Heart left ventricle (tissue), 16 donors: ENCODE measurements at regions of chr14 and their contacts with region 1.

Region 1: DNA sequence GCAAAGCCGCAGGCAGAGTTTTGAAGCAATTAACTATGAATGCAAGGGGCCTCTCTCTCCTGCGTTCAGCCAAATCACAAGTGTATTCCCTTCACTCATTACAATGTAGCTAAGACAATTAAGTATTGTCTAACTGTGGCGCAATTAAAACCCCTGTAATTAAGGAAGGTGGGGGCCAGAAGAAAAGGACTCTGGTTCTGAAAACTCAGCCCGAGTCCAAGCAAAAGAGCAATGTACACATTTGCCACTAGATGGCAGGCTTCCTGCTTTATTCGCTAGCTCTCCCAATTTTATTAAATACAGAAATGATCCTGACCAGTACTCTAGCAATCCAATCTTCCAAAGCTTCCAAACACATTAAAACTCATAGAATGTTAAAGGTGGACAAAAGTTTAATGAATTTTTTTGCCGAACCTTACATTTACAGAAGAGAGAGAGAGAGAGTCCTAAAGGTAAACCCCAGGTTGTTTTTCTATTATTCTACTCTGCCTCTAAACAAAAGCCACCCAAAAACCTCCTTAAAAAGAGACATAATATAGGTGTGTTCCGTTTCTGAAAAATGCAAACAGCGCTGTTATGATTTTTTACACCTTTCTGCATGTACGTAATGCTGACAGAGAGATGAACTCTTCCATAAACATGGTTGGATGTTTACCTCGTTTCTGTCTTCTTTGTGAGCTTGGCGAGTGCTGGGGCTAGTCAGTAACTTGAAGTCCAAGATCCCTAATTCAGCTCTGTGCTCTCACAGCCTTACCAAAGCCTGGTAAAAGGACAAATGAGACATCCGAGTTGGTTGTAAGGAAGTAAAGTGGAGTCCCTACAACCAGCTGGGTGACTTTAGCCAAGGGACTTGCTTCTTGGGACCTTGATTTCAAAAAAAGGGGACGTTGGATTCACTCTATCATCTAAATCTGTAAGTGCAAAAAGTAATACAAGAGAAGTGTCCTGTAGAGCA is 50.9 kb upstream of the VASH1 start:
- DNase-seq: peak in 1 of 5 donors; percentile 35
- ATAC-seq: peak in 3 of 4 donors; percentile 35 to 72 (median 66)
- H3K4me3 ChIP-seq: no peak overlapping the region
- H3K27ac ChIP-seq: peak overlapping the region in 1 of 12 donors; percentile 30
- H3K4me1 ChIP-seq: peaks cover 0 to 18% (median 10%) of the 10 kb centered on the region in 12 donors
- H3K27me3 ChIP-seq: no peaks in the 10 kb centered on the region
- CTCF ChIP-seq: peak; percentile 71 to 86 (median 76)
- POLR2A ChIP-seq: no peak

Region 2: GRCh38 chr14:76761136-76761959 is 51.0 kb after region 1 on chr14 and contains the start of gene VASH1:
- intact Hi-C with region 1: loop called in 9 of 10 experiments (anchors 1 to 5 kb)
- DNase-seq: peak; percentile 74 to 91 (median 85)
- ATAC-seq: peak in 3 of 4 donors; percentile 74 to 85 (median 84)
- H3K4me3 ChIP-seq: peak within 1 kb of the TSS; percentile 51 to 98 (median 86)
- H3K27ac ChIP-seq: peak within 1 kb of the TSS; percentile 73 to 96 (median 89)
- H3K4me1 ChIP-seq: peaks cover 0 to 52% (median 39%) of the 10 kb centered on the region in 12 donors
- H3K27me3 ChIP-seq: peaks cover 0 to 6% (median 0%) of the 10 kb centered on the region in 9 donors
- CTCF ChIP-seq: no peak
- POLR2A ChIP-seq: peak in 1 of 2 donors; percentile 79
- total RNA-seq, gene VASH1: 7.8 to 30.8 (median 11.1) TPM

Region 3: DNA sequence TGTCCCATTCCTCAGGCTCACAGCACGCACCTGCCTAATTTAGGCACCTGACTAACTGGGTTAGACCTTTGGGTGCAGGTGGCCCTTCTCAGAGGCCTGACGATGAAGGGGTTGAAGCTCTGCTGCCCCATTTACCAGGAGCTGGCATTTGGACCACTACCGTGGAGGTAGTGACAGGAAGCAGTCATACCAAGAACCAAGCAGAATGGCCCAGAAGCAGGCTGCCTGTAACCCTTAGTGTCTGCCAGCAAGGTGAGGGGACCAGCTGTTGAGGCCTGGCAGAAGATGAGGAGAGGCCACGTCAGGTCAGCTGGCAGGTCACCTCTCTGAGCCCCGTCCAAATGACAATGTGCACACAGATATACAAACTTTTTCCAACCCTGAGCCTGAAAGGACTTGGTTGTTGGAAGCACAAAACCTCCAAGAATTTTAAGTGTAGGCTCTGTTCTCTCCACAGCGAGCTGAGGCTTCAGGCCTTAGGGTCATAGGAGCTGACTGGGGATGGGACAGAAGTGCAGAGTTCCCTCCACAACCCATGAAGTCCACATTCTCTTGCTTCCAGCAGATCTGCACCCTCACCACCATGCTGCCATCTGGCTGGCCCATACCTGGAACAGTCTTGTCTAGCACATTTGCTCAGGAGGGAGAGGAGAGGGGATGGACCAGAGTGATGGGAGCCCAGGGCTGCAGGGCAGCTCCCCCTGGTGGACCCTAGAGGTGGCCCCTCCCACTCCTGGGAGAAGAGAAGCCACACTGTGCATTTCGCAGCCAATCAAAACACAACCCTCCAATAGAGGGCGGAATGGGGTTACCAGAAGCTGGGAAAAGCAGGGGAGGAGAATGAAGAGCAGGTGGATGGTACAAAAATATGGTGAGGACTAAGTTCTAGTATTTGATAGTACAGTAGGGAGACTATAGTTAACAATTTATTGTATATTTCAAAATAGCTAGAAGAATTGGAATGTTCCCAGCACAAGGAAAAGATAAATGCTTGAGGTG is 74.2 kb after region 1 on chr14:
- intact Hi-C with region 1: loop called (anchors 1 to 2 kb)
- DNase-seq: peak; percentile 85 to 89 (median 86)
- ATAC-seq: peak; percentile 88 to 94 (median 90)
- H3K4me3 ChIP-seq: no peak overlapping the region
- H3K27ac ChIP-seq: peak overlapping the region in 11 of 12 donors; percentile 3 to 79 (median 41)
- H3K4me1 ChIP-seq: peaks cover 0 to 63% (median 48%) of the 10 kb centered on the region in 12 donors
- H3K27me3 ChIP-seq: no peaks in the 10 kb centered on the region
- CTCF ChIP-seq: peak; percentile 88 to 99 (median 92)
- POLR2A ChIP-seq: peak in 1 of 2 donors; percentile 13

Region 4: GRCh38 chr14:76810953-76811400 is 100.6 kb after region 1 on chr14:
- intact Hi-C with region 1: loop called in 1 of 10 experiments (anchors 2 kb)
- DNase-seq: peak in 2 of 5 donors; percentile 27 to 28
- ATAC-seq: peak in 3 of 4 donors; percentile 24 to 45 (median 34)
- H3K4me3 ChIP-seq: peak overlapping the region in 10 of 12 donors; percentile 5 to 96 (median 80)
- H3K27ac ChIP-seq: peak overlapping the region in 10 of 12 donors; percentile 80 to 96 (median 92)
- H3K4me1 ChIP-seq: peaks cover 0 to 37% (median 22%) of the 10 kb centered on the region in 12 donors
- H3K27me3 ChIP-seq: no peaks in the 10 kb centered on the region
- CTCF ChIP-seq: peak; percentile 17 to 63 (median 43)
- POLR2A ChIP-seq: no peak

Region 5: DNA sequence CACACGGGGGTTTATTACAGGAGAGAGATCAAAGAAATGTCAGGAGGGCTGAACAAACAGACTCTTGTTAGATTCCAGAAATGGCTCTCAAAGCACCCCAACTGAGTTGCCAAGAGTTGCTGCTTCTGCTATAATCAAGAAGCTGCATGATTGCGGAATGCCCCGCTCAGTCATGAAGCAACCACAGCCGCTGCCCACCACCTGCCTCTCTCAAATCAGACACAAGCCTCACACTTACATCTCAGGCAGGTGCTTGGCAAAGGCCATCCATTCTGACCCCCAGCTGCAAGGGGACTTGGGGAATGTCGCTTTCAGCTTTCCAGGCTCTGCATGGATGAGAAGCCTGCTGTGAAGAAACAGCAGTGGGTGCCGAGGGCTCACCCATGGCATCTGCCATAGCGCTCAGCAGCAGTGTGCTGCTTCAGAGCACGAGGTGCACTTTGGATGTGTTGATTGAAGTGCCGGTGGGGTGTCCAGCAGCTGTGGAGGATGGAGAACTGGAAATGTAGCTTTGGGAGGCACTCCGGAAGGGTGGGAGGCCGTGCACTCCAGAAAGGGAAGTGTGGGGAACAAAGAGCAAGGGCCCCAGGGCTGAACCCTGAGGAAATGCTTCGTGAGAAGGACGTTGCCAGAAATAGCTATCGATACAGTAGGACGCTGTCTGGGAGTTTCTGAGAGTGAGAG is 153.5 kb after region 1 on chr14:
- intact Hi-C with region 1: loop called in 2 of 10 experiments (anchors 10 kb)
- DNase-seq: peak in 4 of 5 donors; percentile 78 to 84 (median 81)
- ATAC-seq: peak; percentile 80 to 91 (median 84)
- H3K4me3 ChIP-seq: peak overlapping the region in 9 of 12 donors; percentile 20 to 56 (median 46)
- H3K27ac ChIP-seq: peak overlapping the region; percentile 43 to 92 (median 82)
- H3K4me1 ChIP-seq: peaks cover 9 to 53% (median 30%) of the 10 kb centered on the region in 12 donors
- H3K27me3 ChIP-seq: no peaks in the 10 kb centered on the region
- CTCF ChIP-seq: no peak
- POLR2A ChIP-seq: no peak

Region 6: DNA sequence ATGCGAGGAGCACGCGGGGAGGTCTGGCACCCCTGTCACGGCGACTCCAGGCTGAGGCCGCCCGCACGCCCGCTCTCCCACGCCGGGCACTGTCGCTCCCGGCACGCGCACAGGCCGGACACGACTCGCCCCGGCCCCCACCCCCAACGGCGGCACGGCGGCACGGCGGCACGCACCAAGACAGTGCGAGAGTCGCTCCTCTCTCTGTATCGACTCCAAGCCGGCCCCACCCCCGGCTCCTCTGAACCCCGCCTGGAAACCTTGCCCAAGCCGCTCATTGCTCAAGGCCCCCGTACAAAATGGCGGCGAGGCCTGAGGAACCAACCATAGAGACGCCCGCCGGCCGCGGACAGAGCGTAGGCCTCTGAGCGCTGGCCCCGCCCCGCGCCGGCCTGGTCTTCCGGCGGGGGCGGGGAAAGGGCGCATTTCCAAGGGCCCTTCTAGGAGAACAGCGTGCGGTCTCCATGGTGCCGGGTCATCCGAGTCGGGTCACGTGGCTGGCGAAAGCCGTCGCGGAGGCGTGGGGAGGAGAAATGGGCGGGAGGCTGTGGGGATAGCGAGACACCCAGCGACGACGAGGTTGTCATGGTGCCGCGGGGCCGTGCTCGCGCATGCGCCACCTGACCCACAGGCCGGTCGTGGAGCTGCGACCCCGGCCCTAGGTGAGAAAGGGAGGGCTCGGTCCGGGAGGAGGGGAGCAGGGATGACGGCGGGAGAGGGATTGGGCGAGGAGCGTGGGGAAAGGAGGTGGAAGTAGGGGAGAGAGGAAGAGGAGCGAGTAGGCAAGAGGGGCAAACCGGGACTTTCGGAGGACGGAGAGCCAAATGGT is 387.6 kb after region 1 on chr14 and contains the start of gene CIPC:
- intact Hi-C with region 1: loop called in 1 of 10 experiments (anchors 10 kb)
- DNase-seq: peak; percentile 100
- ATAC-seq: peak; percentile 89 to 96 (median 92)
- H3K4me3 ChIP-seq: peak within 1 kb of the TSS; percentile 64 to 92 (median 74)
- H3K27ac ChIP-seq: peak within 1 kb of the TSS; percentile 96 to 99 (median 98)
- H3K4me1 ChIP-seq: peaks cover 3 to 64% (median 45%) of the 10 kb centered on the region in 12 donors
- H3K27me3 ChIP-seq: no peaks in the 10 kb centered on the region
- CTCF ChIP-seq: no peak
- POLR2A ChIP-seq: peak; percentile 28 to 67
- total RNA-seq, gene CIPC: 44.5 to 85.9 (median 66.7) TPM